GM10248 (cell line): ENCODE measurements at regions of chr12 and their contacts with region 1.

Region 1: GRCh38 chr12:1939801-1940607 is 21.6 kb upstream of the CACNA2D4 start:
- DNase-seq: peak; percentile 83
- CTCF ChIP-seq: peak; percentile 90

Region 2: DNA sequence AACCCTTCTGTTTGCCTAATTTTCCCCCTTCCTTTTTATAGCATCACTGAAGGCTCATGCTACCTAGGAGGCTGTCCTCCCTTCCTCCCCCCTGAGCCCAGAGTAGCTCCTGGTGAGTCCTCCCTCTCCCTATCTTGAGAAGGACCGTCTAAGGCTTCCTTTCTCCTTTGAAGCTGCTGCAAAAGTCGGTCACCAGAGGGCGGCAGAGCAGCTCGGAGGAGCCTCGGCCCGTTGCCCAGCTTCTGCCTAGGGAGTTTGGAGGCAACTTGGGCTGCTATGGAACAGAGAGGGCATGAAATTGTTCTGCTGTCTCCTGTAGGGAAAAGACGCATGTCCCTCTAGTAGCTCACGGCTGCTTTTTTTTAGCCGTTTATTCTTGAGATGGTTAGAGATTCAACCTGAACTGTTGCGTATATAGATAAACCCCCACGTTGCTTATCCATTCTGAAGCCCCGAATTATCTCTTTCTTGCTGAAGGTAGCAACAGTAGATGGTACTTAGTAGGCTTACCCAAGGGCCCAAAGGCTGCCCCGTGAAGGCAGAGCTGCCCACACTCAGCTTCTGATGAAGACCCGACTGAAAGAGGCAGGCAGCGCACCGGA is 305.3 kb before region 1 on chr12:
- CTCF ChIA-PET with region 1: interaction called, 33 read pairs
- POLR2A ChIA-PET with region 1: no interaction called
- DNase-seq: peak; percentile 70
- CTCF ChIP-seq: peak; percentile 86

Region 3: DNA sequence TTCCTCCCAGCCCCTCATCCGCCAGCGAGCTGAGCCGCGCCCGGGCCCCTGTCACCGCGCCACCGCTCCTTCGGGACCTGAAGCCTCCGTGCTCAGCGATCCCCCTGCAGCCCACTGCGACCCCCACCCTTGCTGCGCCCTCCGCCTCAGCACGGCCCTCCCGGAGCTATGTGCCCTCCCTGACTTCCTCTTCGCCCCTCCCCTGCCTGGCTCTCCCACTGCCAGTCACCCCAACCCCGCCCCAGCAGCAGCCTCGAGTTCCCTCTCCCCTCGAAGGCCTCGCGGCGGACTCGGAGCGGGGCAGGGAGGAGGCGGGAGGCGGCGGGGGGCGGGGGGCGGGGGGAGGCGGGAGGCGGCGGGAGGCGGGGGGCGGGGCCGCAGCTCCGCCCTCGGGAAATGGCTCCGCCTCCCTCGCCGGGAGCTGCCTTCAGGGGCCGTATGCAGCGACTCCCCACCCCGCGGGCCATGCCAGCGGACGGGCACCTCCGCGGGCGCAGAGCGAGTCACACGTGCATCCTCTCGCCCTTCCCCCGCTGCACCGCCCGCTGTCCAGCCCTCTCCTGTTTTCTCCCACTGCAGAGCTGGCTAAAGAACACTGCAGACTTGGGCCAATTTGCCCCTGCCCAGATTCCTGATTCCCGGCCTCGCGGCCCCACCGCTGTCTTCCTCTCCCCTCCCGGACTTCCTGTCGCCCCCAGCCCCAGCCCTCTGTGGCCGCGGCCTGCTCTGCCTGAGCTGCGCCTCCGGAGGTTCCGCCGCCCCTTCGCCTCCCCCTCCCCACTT is 278.3 kb before region 1 on chr12:
- CTCF ChIA-PET with region 1: interaction called, 10 read pairs
- POLR2A ChIA-PET with region 1: no interaction called
- DNase-seq: peak; percentile 88
- CTCF ChIP-seq: no peak

Region 4: GRCh38 chr12:1795785-1796514 is 144.1 kb before region 1 on chr12:
- CTCF ChIA-PET with region 1: interaction called, 186 read pairs
- POLR2A ChIA-PET with region 1: no interaction called
- DNase-seq: peak; percentile 95
- CTCF ChIP-seq: peak; percentile 96

Region 5: DNA sequence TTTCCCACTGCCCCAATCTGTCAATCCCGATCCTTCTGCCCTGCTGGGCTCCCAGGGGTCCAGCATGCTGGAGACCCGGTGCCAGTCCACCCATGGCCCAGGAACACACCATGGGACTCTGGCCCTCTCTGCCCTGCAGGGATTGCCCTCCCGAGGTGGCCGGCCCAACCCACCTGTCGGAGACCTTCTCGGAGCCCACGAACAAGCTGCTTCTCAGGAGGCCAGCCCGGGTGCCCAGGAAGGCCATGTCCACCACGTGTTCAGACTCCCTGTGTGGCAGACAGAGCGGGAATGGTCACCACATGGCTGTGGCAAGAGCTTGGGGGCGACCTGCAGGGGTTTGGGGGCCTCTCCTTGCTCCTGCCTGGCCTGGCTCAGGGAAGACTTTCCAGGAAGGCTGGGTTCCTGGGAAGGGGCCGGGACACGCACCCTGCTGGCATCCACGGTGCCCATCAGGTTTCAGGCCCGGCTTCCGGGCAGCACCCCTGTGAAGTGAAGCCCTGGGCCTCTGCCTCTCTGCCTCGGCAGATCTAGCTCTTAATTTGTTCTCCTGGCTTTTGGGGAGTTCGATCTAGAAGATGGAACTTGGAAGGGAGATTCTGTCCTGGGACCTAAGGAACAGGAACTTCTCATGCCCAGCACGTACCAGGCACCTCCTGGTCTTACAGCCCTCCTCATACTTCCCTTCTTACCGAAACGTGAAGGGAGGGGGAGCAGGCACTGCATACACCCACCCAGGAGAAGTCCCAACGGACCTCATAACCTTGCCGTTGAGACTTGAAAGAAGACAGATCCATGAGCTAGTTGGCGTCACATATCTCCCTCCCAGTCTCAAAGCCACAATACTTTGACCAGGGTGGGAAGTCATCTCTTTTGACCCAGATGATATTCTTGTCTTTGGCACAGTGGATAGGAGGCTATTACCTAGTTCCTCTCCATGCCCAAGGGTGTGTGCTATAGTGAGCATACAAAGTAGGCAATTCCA is 93.3 kb before region 1 on chr12:
- CTCF ChIA-PET with region 1: no interaction called
- POLR2A ChIA-PET with region 1: no interaction called
- DNase-seq: no peak
- CTCF ChIP-seq: no peak

Region 6: GRCh38 chr12:1927751-1928351 is 12.2 kb before region 1 on chr12:
- CTCF ChIA-PET with region 1: interaction called, 22 read pairs
- POLR2A ChIA-PET with region 1: no interaction called
- DNase-seq: no peak
- CTCF ChIP-seq: no peak

Region 7: DNA sequence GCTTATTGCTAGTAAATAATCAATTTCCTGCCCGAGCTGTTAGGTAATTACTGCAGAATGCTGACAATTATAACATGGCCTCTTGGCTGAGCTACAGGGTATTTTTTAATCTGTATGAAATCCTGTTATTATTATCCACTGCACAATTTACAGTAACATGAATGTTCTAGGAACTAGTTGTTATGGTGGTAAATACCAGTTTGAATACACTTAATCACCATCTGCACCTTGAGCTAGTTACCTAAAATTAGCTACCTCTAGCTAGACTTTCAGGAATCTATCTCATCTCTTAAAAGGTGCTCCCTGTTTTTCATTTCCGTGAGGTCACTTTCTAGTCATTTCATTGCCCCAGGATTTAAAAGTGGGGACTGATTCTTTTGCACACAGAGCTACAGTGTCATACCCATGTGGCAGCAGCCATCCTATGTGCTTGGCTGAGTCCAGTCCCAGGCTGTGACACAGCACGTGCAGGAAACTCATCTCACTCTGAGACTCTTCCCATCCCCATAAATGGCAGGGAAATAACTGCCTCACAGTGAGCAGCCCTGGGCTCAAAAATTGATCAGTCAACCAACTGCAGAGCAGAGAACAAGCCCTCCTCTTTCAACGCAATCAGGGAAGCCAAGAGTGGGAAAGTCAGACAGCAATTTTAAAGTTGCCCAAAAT is 26.7 kb after region 1 on chr12:
- CTCF ChIA-PET with region 1: interaction called, 20 read pairs
- POLR2A ChIA-PET with region 1: no interaction called
- DNase-seq: no peak
- CTCF ChIP-seq: no peak

Region 8: GRCh38 chr12:2113119-2113912 is 173.3 kb after region 1 on chr12:
- CTCF ChIA-PET with region 1: no interaction called
- POLR2A ChIA-PET with region 1: no interaction called
- DNase-seq: no peak
- CTCF ChIP-seq: no peak